ENCODE measurements at regions of chr2 and their contacts with region 1.

Region 1: DNA sequence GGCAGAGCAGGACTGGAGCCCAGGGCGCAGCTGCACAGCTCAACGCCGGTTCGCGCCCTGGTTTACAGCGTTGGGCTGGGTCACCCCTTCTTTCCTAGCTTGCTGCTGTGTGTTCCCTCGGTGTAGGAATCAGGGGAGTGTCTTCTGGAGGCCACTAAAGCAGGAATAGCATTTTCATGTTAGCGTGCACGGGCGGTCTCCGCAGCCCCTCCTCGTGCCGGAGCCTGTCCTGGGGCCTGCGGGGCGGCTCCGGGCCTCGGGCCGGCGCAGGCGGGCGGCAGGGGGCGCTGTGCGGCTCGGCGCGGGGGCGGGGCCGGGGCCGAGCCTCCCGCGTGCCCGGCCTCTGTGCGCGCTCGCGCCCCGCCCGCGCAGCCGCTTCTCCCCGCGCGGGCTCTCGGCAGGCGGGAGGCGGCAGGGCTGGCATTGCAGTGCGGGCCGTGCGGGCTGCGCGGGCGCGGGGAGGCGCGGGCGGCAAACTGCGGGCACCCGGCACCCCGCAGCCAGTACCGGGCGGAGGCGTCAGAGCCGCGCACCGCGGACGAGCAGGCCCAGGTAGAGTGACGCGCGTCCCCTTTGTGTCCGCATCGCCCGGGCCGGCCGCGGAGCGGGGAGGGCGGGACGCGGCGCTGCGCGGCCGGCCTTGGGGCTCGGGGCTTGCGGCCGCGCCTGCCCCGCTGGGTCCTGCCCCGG is at the start of gene RNF144A:
- DNase-seq: peak; percentile 55 to 88 (median 70)
- ATAC-seq: peak; percentile 51 to 86 (median 74)
- H3K4me3 ChIP-seq: peak within 1 kb of the TSS; percentile 63 to 97 (median 76)
- H3K27ac ChIP-seq: peak within 1 kb of the TSS; percentile 52 to 90 (median 74)
- H3K4me1 ChIP-seq: peaks cover 13 to 43% (median 34%) of the 10 kb centered on the region in 12 donors
- H3K27me3 ChIP-seq: no peaks in the 10 kb centered on the region
- CTCF ChIP-seq: peak; percentile 27 to 64 (median 50)
- POLR2A ChIP-seq: no peak
- total RNA-seq, gene RNF144A: 10.3 to 27.2 (median 14.9) TPM

Region 2: DNA sequence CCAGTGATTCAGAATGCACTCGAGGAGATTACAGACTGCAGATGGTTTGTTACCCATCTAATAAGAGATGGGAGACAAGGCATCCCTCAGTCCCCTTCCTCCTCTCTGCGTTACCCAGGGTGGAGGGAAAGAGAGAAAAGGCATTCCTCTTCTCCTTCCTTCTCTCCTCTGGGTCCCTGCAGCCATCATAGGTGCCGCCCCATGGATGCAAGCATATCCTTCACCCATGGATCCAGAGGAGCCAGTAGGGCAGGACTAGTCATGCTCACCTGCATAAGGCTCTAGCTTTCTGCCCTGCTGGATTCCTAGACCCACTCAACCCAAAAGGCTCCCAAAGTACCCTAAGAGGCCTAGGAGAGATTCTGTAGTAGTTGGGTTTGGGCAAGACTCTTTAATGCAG is 71.9 kb before region 1 on chr2:
- intact Hi-C with region 1: no loop called
- DNase-seq: no peak
- ATAC-seq: no peak
- H3K4me3 ChIP-seq: no peak overlapping the region
- H3K27ac ChIP-seq: no peak overlapping the region
- H3K4me1 ChIP-seq: no peaks in the 10 kb centered on the region
- H3K27me3 ChIP-seq: no peaks in the 10 kb centered on the region
- CTCF ChIP-seq: no peak
- POLR2A ChIP-seq: no peak

Region 3: GRCh38 chr2:6968319-6969100 is 51.3 kb after region 1 on chr2:
- intact Hi-C with region 1: loop called in 2 of 10 experiments (anchors 2 to 10 kb)
- DNase-seq: peak in 3 of 5 donors; percentile 49 to 54 (median 51)
- ATAC-seq: peak; percentile 83 to 94 (median 91)
- H3K4me3 ChIP-seq: no peak overlapping the region
- H3K27ac ChIP-seq: peak overlapping the region in 2 of 12 donors; percentile 5 to 39
- H3K4me1 ChIP-seq: peaks cover 0 to 35% (median 13%) of the 10 kb centered on the region in 12 donors
- H3K27me3 ChIP-seq: no peaks in the 10 kb centered on the region
- CTCF ChIP-seq: peak in 8 of 12 donors; percentile 23 to 46 (median 35)
- POLR2A ChIP-seq: no peak

Region 4: DNA sequence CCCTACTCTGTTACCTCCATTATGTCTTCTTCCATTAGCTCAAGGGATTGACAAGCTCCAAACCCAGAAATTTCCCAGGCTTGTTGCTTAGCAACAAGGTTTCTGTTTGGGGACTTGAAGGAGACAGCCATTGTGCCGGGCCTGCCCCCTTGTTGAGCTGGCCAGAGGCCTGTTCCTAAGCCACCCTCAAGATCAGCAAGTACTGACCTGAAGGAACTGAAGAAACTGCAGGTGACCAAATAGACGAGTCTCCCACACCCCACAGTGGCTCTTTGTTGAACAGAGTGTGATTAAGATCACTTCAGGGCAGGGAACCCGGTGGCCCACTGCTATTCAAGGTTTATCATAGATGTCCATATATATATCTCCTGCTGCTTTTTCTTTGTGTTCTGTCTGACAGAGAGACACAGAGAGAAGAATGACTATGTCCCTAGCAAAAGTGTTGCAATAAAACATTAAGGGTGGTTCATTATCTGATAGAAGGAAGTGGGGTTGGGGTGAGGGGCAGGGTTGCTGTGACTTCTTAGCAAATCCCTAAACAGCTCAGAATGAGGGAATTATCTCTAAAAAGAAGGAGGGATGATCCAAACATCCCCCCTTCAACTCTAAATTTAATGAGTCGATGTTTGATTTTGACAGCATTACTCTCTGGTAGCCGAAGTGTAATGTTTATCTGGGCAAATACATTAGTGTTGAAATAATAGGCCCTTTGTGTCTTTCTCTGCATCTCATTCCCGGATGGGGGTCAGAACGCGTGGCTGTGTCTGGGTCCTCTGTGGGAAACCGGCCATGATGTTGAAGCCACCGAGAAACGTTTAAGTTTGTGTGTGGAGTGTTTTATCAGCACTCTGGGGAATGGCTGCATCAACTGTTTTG is 69.3 kb after region 1 on chr2:
- intact Hi-C with region 1: loop called in 1 of 10 experiments (anchors 5 kb)
- DNase-seq: peak in 2 of 5 donors; percentile 42 to 43
- ATAC-seq: peak in 3 of 4 donors; percentile 3 to 52 (median 26)
- H3K4me3 ChIP-seq: no peak overlapping the region
- H3K27ac ChIP-seq: peak overlapping the region; percentile 3 to 62 (median 48)
- H3K4me1 ChIP-seq: peaks cover 9 to 53% (median 37%) of the 10 kb centered on the region in 12 donors
- H3K27me3 ChIP-seq: no peaks in the 10 kb centered on the region
- CTCF ChIP-seq: no peak
- POLR2A ChIP-seq: no peak

Region 5: GRCh38 chr2:7007846-7008741 is 90.9 kb after region 1 on chr2:
- intact Hi-C with region 1: loop called in 6 of 10 experiments (anchors 1 to 5 kb)
- DNase-seq: peak; percentile 91 to 97 (median 95)
- ATAC-seq: peak; percentile 80 to 88 (median 86)
- H3K4me3 ChIP-seq: peak overlapping the region in 9 of 12 donors; percentile 8 to 37 (median 23)
- H3K27ac ChIP-seq: peak overlapping the region; percentile 59 to 89 (median 81)
- H3K4me1 ChIP-seq: peaks cover 22 to 79% (median 62%) of the 10 kb centered on the region in 12 donors
- H3K27me3 ChIP-seq: no peaks in the 10 kb centered on the region
- CTCF ChIP-seq: peak in 11 of 12 donors; percentile 26 to 60 (median 44)
- POLR2A ChIP-seq: no peak

Region 6: GRCh38 chr2:7031547-7032245 is 114.5 kb after region 1 on chr2:
- intact Hi-C with region 1: loop called in 9 of 10 experiments (anchors 2 to 5 kb)
- DNase-seq: peak in 1 of 5 donors; percentile 54
- ATAC-seq: peak in 2 of 4 donors; percentile 18 to 55
- H3K4me3 ChIP-seq: no peak overlapping the region
- H3K27ac ChIP-seq: no peak overlapping the region
- H3K4me1 ChIP-seq: peaks cover 0 to 42% (median 24%) of the 10 kb centered on the region in 12 donors
- H3K27me3 ChIP-seq: no peaks in the 10 kb centered on the region
- CTCF ChIP-seq: no peak
- POLR2A ChIP-seq: no peak

Region 7: DNA sequence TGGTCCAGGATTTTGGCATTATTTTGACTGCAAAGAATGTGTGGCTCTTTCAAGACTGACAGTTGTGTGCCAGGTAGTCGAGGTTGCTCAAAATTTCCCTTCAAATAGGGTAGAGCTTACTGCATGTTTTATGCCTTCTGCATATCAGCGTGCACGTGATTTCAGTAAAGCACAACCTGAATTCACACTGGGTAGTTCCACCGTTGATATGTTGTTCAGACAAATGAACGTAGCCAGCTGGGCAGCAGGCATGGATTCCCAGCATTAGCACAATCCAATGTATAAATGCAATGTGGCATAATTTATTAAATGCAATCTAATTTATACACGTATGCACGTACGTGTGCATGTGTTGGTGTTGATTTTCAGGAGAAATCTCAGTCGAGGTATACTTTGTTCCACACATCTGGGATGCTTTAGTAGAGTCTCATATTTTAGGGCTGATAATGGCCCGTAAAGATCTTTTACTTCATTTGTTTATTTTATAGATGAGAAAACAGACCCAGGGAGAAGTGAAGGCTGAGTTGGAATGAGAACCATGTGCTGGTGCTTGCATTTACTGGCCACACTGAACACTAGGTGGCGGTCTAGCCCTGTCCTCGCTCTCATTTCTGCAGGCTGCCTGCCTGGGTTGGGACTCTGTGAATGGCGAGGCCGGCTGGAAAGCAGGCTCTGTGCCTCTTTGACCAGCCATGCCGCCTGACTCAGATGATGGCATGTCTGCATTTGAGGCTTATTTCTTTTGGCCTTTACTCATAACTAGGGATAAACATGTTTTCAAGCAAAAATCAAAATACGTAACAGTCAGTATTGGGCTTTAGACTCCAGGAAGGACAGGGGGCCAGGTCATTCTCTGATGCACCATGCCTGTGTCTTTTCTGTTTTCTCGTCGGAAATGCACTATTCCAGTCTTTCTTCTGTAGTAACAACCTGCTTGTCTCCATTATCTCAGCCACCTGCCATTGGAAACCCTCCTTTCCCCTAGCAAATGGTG is 120.4 kb after region 1 on chr2:
- intact Hi-C with region 1: loop called in 5 of 10 experiments (anchors 5 kb)
- DNase-seq: peak; percentile 50 to 79 (median 54)
- ATAC-seq: peak in 3 of 4 donors; percentile 71 to 82 (median 78)
- H3K4me3 ChIP-seq: no peak overlapping the region
- H3K27ac ChIP-seq: no peak overlapping the region
- H3K4me1 ChIP-seq: peaks cover 0 to 12% (median 0%) of the 10 kb centered on the region in 12 donors
- H3K27me3 ChIP-seq: no peaks in the 10 kb centered on the region
- CTCF ChIP-seq: peak; percentile 43 to 79 (median 63)
- POLR2A ChIP-seq: no peak

Region 8: GRCh38 chr2:7044261-7045250 is 127.3 kb after region 1 on chr2:
- intact Hi-C with region 1: loop called in 4 of 10 experiments (anchors 1 to 5 kb)
- DNase-seq: peak; percentile 58 to 81 (median 70)
- ATAC-seq: peak; percentile 74 to 86 (median 84)
- H3K4me3 ChIP-seq: no peak overlapping the region
- H3K27ac ChIP-seq: peak overlapping the region in 1 of 12 donors; percentile 4
- H3K4me1 ChIP-seq: peaks cover 0 to 17% (median 2%) of the 10 kb centered on the region in 12 donors
- H3K27me3 ChIP-seq: no peaks in the 10 kb centered on the region
- CTCF ChIP-seq: peak; percentile 91 to 99 (median 98)
- POLR2A ChIP-seq: no peak

Region 9: DNA sequence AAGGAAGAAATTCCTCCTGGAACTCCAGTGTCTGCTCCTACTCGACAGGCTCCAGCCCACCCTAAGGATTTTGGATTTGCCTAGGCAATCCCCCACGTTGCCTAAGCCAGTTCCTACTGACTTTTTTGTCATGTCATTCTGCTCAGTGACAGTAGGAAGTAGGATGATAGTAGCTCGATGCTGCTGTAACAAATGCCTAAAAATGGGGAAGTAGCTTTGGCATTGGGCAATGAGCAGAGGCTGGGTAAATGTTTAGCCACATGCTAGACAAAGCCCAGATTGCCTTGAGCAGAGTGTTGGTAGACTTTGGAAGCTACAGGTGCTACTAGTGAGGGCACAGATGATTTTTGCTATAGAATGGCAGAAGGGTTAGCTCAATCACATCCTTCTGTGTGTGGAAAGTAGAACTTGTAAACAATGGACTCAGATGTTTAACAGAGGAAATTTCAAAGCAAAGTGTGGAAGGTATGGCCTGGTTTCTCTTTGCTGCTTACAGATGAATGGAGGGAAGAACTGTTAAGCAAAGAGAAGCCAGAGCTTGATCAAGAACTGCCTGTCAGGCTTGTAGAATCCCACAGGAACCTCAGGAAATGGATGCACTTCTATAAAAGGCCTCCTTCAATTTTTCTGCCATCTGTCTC is 154.8 kb after region 1 on chr2:
- intact Hi-C with region 1: no loop called
- DNase-seq: no peak
- ATAC-seq: peak in 2 of 4 donors; percentile 16 to 46
- H3K4me3 ChIP-seq: no peak overlapping the region
- H3K27ac ChIP-seq: no peak overlapping the region
- H3K4me1 ChIP-seq: peaks cover 0 to 7% (median 0%) of the 10 kb centered on the region in 12 donors
- H3K27me3 ChIP-seq: no peaks in the 10 kb centered on the region
- CTCF ChIP-seq: no peak
- POLR2A ChIP-seq: no peak

Measured in heart left ventricle (tissue), 16 donors.